CD8-positive, alpha-beta memory T cell (primary cell): ENCODE measurements at regions of chr1 and their contacts with region 1.

Region 1: DNA sequence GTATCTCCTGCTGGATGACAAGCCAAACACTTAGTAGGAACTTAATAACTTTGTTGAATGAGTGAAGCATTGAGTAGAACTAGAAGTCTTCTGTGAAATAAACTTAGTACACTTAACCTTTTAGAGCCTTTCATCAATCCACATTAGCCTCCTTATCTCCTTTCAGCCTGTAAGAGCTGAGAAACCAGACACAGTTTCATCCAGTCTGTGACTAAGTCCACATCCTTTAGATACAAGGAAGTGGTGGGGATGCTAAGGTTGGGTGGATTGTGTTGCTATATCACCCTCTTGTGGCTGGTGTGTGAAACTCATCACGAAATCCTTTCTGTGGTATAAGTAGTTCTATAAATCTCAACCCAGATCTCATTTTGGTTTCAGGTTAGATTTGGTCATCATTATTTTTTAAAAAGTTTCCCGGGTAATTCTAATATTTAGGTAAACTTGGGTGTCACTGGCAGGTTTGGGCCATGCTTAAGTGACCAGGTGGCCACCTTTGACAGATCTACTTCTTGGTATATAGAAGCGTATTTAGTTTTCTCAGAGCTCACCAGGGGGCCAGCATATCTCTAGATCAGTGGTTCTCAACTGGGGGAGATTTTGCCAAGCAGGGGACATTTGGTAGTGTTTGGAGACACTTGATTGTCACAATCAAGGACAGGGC is 27.8 kb upstream of the CD84 start:
- DNase-seq: peak; percentile 19 to 80 (median 76)
- H3K4me3 ChIP-seq: no peak overlapping the region
- H3K4me3 Mint-ChIP-seq: peak overlapping the region in 5 of 7 donors; percentile 19 to 56 (median 45)
- H3K27ac ChIP-seq: no peak overlapping the region
- H3K27ac Mint-ChIP-seq: peak overlapping the region; percentile 68 to 95 (median 92)
- H3K4me1 ChIP-seq: peaks cover 20% of the 10 kb centered on the region
- H3K4me1 Mint-ChIP-seq: peaks cover 46 to 61% (median 58%) of the 10 kb centered on the region in 3 donors
- H3K27me3 ChIP-seq: no peaks in the 10 kb centered on the region
- H3K27me3 Mint-ChIP-seq: no peaks in the 10 kb centered on the region

Region 2: GRCh38 chr1:160428655-160429054 is 178.5 kb before region 1 on chr1:
- CTCF ChIA-PET with region 1: interaction called, 57 read pairs
- POLR2A ChIA-PET with region 1: interaction called, 6 read pairs
- DNase-seq: peak in 3 of 5 donors; percentile 24 to 44 (median 39)
- H3K4me3 ChIP-seq: no peak overlapping the region
- H3K4me3 Mint-ChIP-seq: peak overlapping the region; percentile 0 to 75 (median 57)
- H3K27ac ChIP-seq: no peak overlapping the region
- H3K27ac Mint-ChIP-seq: peak overlapping the region; percentile 69 to 97 (median 87)
- H3K4me1 ChIP-seq: peaks cover 62% of the 10 kb centered on the region
- H3K4me1 Mint-ChIP-seq: peaks cover 62 to 66% (median 62%) of the 10 kb centered on the region in 3 donors
- H3K27me3 ChIP-seq: no peaks in the 10 kb centered on the region
- H3K27me3 Mint-ChIP-seq: no peaks in the 10 kb centered on the region

Region 3: DNA sequence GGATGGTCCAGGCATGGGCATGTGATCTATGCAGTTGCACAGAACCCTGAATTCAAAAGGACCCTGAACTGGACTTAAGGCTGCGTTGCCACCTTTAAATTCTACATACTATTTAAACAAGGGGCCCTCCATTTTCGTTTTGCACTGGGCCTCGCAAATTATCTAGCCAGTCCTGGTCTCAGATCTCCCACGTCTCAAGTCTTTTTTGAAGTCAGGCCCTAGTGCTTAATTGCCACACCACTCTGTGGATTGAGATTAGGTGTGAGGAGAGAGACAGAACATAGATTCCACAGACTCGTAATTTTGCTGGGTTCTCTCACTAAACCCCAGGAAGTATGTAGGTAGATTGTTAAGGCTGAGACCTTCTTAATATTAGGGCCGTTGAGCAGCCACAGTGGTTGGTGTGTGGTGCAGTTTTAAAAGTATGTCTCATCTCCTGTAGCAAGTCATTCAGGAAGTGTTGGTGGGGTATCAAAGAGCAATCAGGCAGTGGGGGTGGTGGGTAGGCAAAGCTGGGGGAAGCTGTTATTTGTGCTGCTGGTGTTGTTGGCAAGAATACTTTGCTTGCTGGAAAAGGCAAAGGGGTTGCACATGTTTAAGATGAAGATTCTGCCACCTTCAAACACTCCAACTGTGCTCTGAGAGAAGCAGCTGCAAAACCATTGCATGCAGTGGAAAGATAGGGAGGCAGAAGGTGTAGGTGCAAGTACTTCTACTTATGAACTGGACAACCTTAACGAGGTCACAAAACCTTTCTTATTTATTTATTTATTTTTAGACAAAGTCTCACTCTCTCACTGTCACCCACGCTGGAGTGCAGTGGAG is 39.1 kb before region 1 on chr1:
- CTCF ChIA-PET with region 1: interaction called, 20 read pairs
- POLR2A ChIA-PET with region 1: no interaction called
- DNase-seq: peak; percentile 40 to 87 (median 79)
- H3K4me3 ChIP-seq: peak overlapping the region; percentile 23
- H3K4me3 Mint-ChIP-seq: peak overlapping the region; percentile 35 to 75 (median 63)
- H3K27ac ChIP-seq: peak overlapping the region; percentile 62
- H3K27ac Mint-ChIP-seq: peak overlapping the region; percentile 90 to 99 (median 96)
- H3K4me1 ChIP-seq: peaks cover 95% of the 10 kb centered on the region
- H3K4me1 Mint-ChIP-seq: peaks cover 93 to 100% (median 99%) of the 10 kb centered on the region in 3 donors
- H3K27me3 ChIP-seq: no peaks in the 10 kb centered on the region
- H3K27me3 Mint-ChIP-seq: no peaks in the 10 kb centered on the region

Region 4: GRCh38 chr1:160618763-160619274 is 11.7 kb after region 1 on chr1:
- CTCF ChIA-PET with region 1: interaction called, 13 read pairs
- POLR2A ChIA-PET with region 1: no interaction called
- DNase-seq: peak in 4 of 5 donors; percentile 21 to 63 (median 44)
- H3K4me3 ChIP-seq: no peak overlapping the region
- H3K4me3 Mint-ChIP-seq: peak overlapping the region in 1 of 7 donors; percentile 1
- H3K27ac ChIP-seq: no peak overlapping the region
- H3K27ac Mint-ChIP-seq: peak overlapping the region; percentile 3 to 91 (median 63)
- H3K4me1 ChIP-seq: peaks cover 37% of the 10 kb centered on the region
- H3K4me1 Mint-ChIP-seq: peaks cover 62 to 86% (median 75%) of the 10 kb centered on the region in 3 donors
- H3K27me3 ChIP-seq: no peaks in the 10 kb centered on the region
- H3K27me3 Mint-ChIP-seq: no peaks in the 10 kb centered on the region